ENCODE measurements at regions of chr7 and their contacts with region 1.

Region 1: DNA sequence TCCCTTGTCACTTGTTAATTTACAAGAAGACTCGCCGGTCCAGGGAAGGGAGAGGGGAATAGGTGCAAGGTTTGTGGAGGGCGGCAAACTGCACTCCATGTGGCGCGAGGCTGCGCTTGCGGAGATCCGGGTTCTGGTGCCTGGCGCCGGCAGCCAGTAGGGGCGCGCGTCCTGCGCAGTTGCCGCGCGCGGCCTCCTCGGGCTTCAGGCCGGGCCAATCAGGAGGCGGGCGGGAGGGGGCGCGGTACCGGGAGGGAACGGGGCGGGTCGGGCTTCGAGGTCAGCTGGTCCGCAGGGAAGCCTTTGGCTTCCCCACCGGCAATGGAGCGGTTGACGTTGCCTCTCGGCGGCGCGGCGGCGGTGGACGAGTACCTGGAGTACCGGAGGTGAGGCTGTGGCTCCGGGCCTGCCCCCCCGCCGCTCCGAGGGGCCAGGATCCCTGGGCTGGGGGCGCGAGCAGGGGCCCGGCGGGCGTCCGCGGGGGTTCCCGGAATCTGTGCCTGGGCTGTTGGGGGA is at the start of gene FAM221A:
- DNase-seq: peak; percentile 90 to 93
- H3K4me3 ChIP-seq: peak within 1 kb of the TSS; percentile 58 to 73 (median 59)
- H3K27ac ChIP-seq: peak within 1 kb of the TSS; percentile 41 to 70 (median 67)
- H3K4me1 ChIP-seq: peaks cover 0 to 6% of the 10 kb centered on the region in 2 donors
- H3K27me3 ChIP-seq: no peaks in the 10 kb centered on the region
- CTCF ChIP-seq: peak; percentile 48 to 92 (median 71)
- POLR2A ChIP-seq: peak in 1 of 2 donors; percentile 43
- total RNA-seq, gene FAM221A: 12.9 to 28.2 (median 14.9) TPM

Region 2: GRCh38 chr7:23597094-23598091 is 82.6 kb before region 1 on chr7 and contains the start of gene CCDC126:
- intact Hi-C with region 1: loop called (anchors 5 kb)
- DNase-seq: peak; percentile 93 to 96
- H3K4me3 ChIP-seq: peak within 1 kb of the TSS; percentile 49 to 77 (median 53)
- H3K27ac ChIP-seq: peak within 1 kb of the TSS; percentile 73 to 98 (median 82)
- H3K4me1 ChIP-seq: peaks cover 17 to 20% of the 10 kb centered on the region in 2 donors
- H3K27me3 ChIP-seq: no peaks in the 10 kb centered on the region
- CTCF ChIP-seq: peak in 1 of 6 experiments; percentile 7
- POLR2A ChIP-seq: peak in 1 of 2 donors; percentile 93
- total RNA-seq, gene CCDC126: 21.1 to 26.8 (median 23.9) TPM

Region 3: DNA sequence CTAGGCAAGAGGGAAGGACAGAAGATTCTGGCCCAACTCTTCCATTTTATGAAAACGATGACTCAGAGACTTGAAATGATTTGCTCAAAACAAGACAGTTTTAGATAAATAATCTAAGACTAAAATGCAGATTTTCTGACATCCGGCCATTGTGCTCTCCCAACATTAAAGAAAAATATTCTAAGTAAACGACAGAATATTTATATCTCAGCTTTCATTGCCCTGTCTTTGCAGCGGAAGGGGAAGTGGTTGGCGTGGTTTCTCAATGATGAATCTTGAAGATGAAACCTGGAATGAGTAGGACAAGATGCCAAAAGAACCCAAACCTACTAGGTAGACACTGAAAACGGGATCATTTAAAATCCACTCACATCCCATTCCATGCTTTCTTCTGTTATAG is 575.2 kb after region 1 on chr7:
- intact Hi-C with region 1: no loop called
- DNase-seq: no peak
- H3K4me3 ChIP-seq: no peak overlapping the region
- H3K27ac ChIP-seq: no peak overlapping the region
- H3K4me1 ChIP-seq: no peaks in the 10 kb centered on the region
- H3K27me3 ChIP-seq: no peaks in the 10 kb centered on the region
- CTCF ChIP-seq: no peak
- POLR2A ChIP-seq: no peak

Region 4: GRCh38 chr7:24764972-24765744 is 1085.2 kb after region 1 on chr7:
- intact Hi-C with region 1: no loop called
- DNase-seq: no peak
- H3K4me3 ChIP-seq: no peak overlapping the region
- H3K27ac ChIP-seq: no peak overlapping the region
- H3K4me1 ChIP-seq: no peaks in the 10 kb centered on the region
- H3K27me3 ChIP-seq: no peaks in the 10 kb centered on the region
- CTCF ChIP-seq: no peak
- POLR2A ChIP-seq: no peak